ENCODE measurements at regions of chr3 and their contacts with region 1.

Region 1: DNA sequence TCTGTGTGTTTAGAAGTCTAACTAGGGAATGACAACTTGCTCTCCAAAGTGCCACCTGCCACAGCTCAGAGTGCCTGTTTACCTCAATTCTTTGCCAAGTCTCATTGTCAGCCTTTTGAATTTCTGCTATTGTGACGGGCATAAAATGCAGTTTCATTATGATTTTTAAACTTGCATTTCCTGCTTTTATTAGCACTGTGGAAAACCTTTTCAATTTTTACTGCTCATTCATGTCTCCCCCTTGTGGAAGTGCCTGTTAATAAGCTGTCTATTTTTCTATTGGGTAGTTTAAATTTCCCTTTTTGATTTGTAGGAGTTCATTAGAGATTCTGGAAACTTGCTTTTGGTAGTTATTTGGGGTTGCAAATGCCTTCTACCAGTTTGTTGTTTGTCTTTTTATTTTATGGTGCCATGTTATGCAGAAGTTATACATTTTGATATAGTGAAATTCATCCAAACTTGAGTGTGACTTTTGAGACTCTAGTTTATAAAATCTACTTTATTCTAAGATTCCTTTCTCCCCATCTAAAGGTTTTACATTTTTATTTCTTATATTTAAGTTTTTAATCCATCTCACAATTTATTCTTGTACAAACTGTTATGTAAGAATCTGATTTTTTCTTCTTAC is 53.9 kb upstream of the FRMD4B start:
- DNase-seq: peak; percentile 47 to 75 (median 71)
- H3K4me3 ChIP-seq: peak overlapping the region in 3 of 7 experiments; percentile 41 to 59 (median 52)
- H3K27ac ChIP-seq: no peak overlapping the region
- H3K4me1 ChIP-seq: peaks cover 0 to 10% (median 6%) of the 10 kb centered on the region in 4 experiments
- H3K27me3 ChIP-seq: no peaks in the 10 kb centered on the region

Region 2: DNA sequence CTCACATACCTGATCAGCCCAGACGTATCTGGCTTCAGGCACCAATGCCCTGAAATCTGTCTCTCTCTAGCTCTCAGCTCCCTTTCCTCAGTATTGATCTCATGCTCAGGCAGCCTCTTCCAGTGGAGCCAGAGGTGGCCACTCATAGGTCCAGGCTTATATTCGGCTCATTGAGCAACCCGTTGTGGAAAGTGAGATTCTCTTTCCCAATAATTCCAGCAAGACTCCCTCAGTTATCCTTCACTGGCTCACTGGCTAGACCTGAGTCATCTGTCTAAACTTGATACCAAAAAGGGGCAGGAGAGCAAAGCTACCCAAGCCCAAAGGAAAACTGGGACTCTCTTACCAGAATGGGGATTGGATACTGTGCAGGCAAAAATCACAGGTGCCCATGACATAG is 20.5 kb before region 1 on chr3:
- CTCF ChIA-PET with region 1: no interaction called
- POLR2A ChIA-PET with region 1: no interaction called
- DNase-seq: no peak
- H3K4me3 ChIP-seq: no peak overlapping the region
- H3K27ac ChIP-seq: no peak overlapping the region
- H3K4me1 ChIP-seq: peaks cover 0 to 3% (median 2%) of the 10 kb centered on the region in 4 experiments
- H3K27me3 ChIP-seq: no peaks in the 10 kb centered on the region

Region 3: DNA sequence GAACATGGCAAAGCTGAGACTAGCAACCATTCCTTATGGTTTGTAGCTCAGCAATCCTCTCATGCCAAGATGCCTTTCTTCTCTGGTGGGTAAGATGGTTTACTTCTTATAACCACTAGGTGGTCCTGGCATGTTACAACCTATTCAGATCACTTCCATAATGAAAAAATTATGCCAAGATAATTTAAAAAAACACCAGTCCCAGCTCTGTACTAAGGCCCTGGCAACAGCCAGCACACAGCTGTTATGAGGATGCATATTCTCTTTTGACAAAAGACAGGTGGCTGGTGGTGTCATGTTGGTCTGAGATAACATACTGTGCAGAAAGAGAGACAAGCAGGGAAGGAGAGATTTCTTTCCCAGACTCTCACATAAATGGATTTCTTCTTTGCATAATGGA is 11.8 kb after region 1 on chr3:
- CTCF ChIA-PET with region 1: interaction called, 24 read pairs
- POLR2A ChIA-PET with region 1: no interaction called
- DNase-seq: peak; percentile 24 to 57 (median 44)
- H3K4me3 ChIP-seq: no peak overlapping the region
- H3K27ac ChIP-seq: no peak overlapping the region
- H3K4me1 ChIP-seq: no peaks in the 10 kb centered on the region
- H3K27me3 ChIP-seq: no peaks in the 10 kb centered on the region

Region 4: DNA sequence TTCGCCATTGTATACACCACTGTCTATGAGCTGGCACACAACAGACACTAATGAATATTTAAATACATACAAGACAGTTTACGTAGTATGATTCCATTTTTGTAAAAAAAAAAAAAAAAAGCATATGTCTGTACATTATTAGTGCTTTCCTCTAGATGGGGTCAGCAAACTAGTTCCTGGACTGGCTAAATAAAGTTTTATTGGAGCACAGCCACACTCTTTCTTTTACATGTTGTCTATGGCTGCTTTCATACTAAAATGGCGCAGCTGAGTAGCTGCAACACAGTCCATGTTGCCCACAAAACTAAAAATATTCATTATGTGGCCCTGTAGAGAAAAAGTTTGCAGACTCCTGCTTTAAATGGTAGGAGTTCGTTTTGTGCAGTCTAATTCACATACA is 16.9 kb after region 1 on chr3:
- CTCF ChIA-PET with region 1: interaction called, 24 read pairs
- POLR2A ChIA-PET with region 1: no interaction called
- DNase-seq: no peak
- H3K4me3 ChIP-seq: no peak overlapping the region
- H3K27ac ChIP-seq: no peak overlapping the region
- H3K4me1 ChIP-seq: peaks cover 9 to 21% (median 18%) of the 10 kb centered on the region in 4 experiments
- H3K27me3 ChIP-seq: no peaks in the 10 kb centered on the region